Activated naive CD4-positive, alpha-beta T cell treated with anti-CD3 and anti-CD28 coated beads, Interleukin-2, amount 10 ng/mL, durations not matched to agents 7 days and 5 days (primary cell): ENCODE measurements at regions of chr18 and their contacts with region 1.

Region 1: GRCh38 chr18:23131693-23132319 is 3.5 kb upstream of the CABLES1 start:
- DNase-seq: peak; percentile 70
- H3K4me3 Mint-ChIP-seq: no peak overlapping the region
- H3K27ac Mint-ChIP-seq: peak overlapping the region; percentile 14
- H3K4me1 Mint-ChIP-seq: peaks cover 28% of the 10 kb centered on the region
- H3K27me3 Mint-ChIP-seq: peaks cover 40% of the 10 kb centered on the region

Region 2: DNA sequence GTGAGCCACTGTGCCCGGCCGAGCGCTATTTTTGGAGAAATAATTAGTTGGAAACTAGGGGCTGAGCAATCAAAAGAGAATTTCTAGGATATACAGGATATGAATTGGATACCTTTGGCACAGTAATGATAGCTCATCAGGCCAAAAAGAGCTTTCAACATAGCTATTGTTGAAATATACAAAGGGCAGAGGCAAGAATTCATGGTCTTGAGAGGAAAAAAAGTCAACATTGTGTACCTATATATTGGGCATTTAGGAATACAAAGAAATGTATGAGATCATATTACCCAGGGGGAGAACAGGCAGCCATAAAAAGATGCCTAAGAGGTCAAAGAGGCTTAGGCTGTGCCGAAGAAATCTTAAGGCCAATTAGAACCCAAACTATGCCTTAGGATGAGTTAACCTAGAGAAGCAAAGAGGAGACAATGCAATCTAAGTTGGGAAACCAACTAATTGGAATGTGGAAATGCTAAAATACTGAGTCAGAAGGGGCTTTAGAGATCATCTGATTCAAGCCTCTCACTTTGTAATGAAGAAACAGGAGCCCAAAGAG is 99.7 kb before region 1 on chr18:
- CTCF ChIA-PET with region 1: interaction called, 13 read pairs
- DNase-seq: no peak
- H3K4me3 Mint-ChIP-seq: no peak overlapping the region
- H3K27ac Mint-ChIP-seq: no peak overlapping the region
- H3K4me1 Mint-ChIP-seq: no peaks in the 10 kb centered on the region
- H3K27me3 Mint-ChIP-seq: no peaks in the 10 kb centered on the region

Region 3: GRCh38 chr18:23377669-23378301 is 246.0 kb after region 1 on chr18:
- CTCF ChIA-PET with region 1: interaction called, 11 read pairs
- DNase-seq: no peak
- H3K4me3 Mint-ChIP-seq: no peak overlapping the region
- H3K27ac Mint-ChIP-seq: peak overlapping the region; percentile 45
- H3K4me1 Mint-ChIP-seq: peaks cover 12% of the 10 kb centered on the region
- H3K27me3 Mint-ChIP-seq: no peaks in the 10 kb centered on the region

Region 4: GRCh38 chr18:23412351-23412964 is 280.7 kb after region 1 on chr18:
- CTCF ChIA-PET with region 1: interaction called, 21 read pairs
- DNase-seq: no peak
- H3K4me3 Mint-ChIP-seq: no peak overlapping the region
- H3K27ac Mint-ChIP-seq: no peak overlapping the region
- H3K4me1 Mint-ChIP-seq: no peaks in the 10 kb centered on the region
- H3K27me3 Mint-ChIP-seq: no peaks in the 10 kb centered on the region